ENCODE measurements at regions of chr21 and their contacts with region 1.

Region 1: DNA sequence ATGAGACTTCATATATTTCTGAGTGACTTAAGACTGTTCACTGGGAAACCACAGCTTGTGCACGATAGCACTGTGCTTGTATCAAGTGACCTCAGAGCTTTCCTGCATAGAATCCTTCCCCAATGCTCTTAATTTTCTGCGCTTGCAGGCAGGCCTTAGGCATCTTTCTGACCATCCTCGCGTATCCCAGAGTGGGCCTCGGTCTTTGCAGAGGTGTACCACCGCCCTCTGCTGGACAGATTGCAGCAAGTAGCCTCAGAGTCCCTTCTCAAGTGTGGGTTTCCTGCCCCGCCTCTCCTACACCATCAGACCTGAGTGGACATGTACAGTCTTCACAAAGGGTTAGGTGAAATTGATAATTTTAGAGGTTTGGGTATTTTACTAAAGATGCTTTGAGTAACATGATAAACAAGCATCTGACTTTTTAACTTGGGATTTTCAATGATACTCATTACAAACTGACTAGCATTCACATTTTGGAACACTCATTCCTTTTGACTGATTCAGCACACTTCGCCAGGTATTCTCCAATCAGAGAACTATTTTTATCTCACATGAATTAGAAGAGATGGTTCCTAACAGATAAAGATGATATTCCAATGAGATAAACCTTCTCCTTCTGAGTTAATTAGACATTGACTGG is 246.5 kb upstream of the USP25 start:
- DNase-seq: peak; percentile 87 to 91 (median 88)
- ATAC-seq: peak; percentile 92 to 100 (median 98)
- H3K4me3 ChIP-seq: no peak overlapping the region
- H3K27ac ChIP-seq: no peak overlapping the region
- H3K4me1 ChIP-seq: peaks cover 0 to 5% (median 0%) of the 10 kb centered on the region in 12 donors
- H3K27me3 ChIP-seq: no peaks in the 10 kb centered on the region
- CTCF ChIP-seq: peak; percentile 82 to 97 (median 92)
- POLR2A ChIP-seq: no peak

Region 2: DNA sequence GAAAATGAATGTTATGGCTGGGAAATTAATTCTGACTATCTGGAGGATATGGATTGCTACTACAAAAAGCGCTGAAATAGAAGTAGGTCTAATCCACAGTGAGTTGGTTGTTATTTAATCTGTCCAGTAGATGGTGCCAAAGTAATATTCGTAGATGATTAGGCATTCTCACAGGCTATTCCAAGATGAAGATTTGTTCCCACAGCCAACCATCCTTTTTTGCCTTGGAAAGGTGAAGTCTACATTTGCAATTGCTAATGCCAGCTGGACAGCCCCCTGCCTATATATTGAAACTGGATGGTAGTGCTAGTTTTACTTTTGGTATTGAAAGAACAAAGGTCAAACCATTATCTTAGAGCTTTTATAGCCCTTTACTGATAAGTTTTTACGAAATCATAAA is 1223.5 kb before region 1 on chr21:
- intact Hi-C with region 1: loop called in 4 of 10 experiments (anchors 5 to 10 kb)
- DNase-seq: no peak
- ATAC-seq: peak in 3 of 4 donors; percentile 53 to 70 (median 62)
- H3K4me3 ChIP-seq: no peak overlapping the region
- H3K27ac ChIP-seq: no peak overlapping the region
- H3K4me1 ChIP-seq: no peaks in the 10 kb centered on the region
- H3K27me3 ChIP-seq: peaks cover 0 to 6% (median 0%) of the 10 kb centered on the region in 9 donors
- CTCF ChIP-seq: peak; percentile 37 to 73 (median 53)
- POLR2A ChIP-seq: no peak

Region 3: GRCh38 chr21:14382835-14383594 is 1100.2 kb before region 1 on chr21 and contains the start of gene HSPA13:
- intact Hi-C with region 1: loop called in 1 of 10 experiments (anchors 10 kb)
- DNase-seq: peak; percentile 99 to 100 (median 100)
- ATAC-seq: peak; percentile 99 to 100 (median 100)
- H3K4me3 ChIP-seq: peak within 1 kb of the TSS; percentile 55 to 93 (median 81)
- H3K27ac ChIP-seq: peak within 1 kb of the TSS; percentile 68 to 96 (median 90)
- H3K4me1 ChIP-seq: peaks cover 0 to 41% (median 19%) of the 10 kb centered on the region in 12 donors
- H3K27me3 ChIP-seq: no peaks in the 10 kb centered on the region
- CTCF ChIP-seq: no peak
- POLR2A ChIP-seq: peak in 1 of 2 donors; percentile 50
- total RNA-seq, gene HSPA13: 10.2 to 23.7 (median 16.0) TPM

Region 4: GRCh38 chr21:14403681-14404318 is 1079.5 kb before region 1 on chr21:
- intact Hi-C with region 1: loop called in 1 of 10 experiments (anchors 10 kb)
- DNase-seq: no peak
- ATAC-seq: no peak
- H3K4me3 ChIP-seq: no peak overlapping the region
- H3K27ac ChIP-seq: no peak overlapping the region
- H3K4me1 ChIP-seq: no peaks in the 10 kb centered on the region
- H3K27me3 ChIP-seq: no peaks in the 10 kb centered on the region
- CTCF ChIP-seq: peak; percentile 29 to 67 (median 52)
- POLR2A ChIP-seq: no peak

Region 5: GRCh38 chr21:14877570-14878228 is 605.6 kb before region 1 on chr21:
- intact Hi-C with region 1: loop called in 1 of 10 experiments (anchors 5 kb)
- DNase-seq: no peak
- ATAC-seq: peak; percentile 55 to 88 (median 79)
- H3K4me3 ChIP-seq: no peak overlapping the region
- H3K27ac ChIP-seq: peak overlapping the region in 3 of 12 donors; percentile 11 to 39 (median 26)
- H3K4me1 ChIP-seq: peaks cover 0 to 42% (median 11%) of the 10 kb centered on the region in 12 donors
- H3K27me3 ChIP-seq: no peaks in the 10 kb centered on the region
- CTCF ChIP-seq: no peak
- POLR2A ChIP-seq: no peak

Region 6: DNA sequence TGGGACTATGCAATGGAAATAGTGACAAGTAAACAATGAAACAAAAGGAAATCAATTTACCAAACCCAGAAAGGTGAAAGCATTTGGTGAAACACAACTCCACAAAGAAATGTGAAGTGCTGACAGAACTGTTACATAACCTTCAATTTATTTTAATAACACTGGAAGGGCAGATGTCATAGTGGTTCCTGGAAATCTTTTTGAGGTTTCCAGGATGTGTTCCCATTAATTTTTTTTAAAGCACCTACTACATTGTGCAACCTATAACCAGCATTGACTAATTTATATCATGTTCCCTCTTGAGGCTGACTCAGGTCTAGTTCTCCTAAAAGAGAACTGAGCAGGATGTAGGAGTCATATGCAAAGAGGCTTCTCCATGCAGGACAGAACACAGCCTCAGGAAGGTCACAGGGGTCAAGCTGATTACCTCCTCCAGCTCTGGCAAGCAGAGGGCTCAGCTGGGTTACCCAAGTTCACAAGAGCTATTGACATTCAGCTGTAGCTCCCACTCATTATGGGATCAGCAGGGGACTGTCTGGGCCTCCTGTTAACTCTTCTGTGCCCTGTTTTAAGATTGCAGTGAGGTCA is 261.4 kb before region 1 on chr21:
- intact Hi-C with region 1: loop called in 1 of 10 experiments (anchors 10 kb)
- DNase-seq: peak in 4 of 5 donors; percentile 41 to 76 (median 69)
- ATAC-seq: peak; percentile 90 to 100 (median 99)
- H3K4me3 ChIP-seq: no peak overlapping the region
- H3K27ac ChIP-seq: peak overlapping the region in 6 of 12 donors; percentile 3 to 54 (median 35)
- H3K4me1 ChIP-seq: peaks cover 0 to 36% (median 12%) of the 10 kb centered on the region in 12 donors
- H3K27me3 ChIP-seq: no peaks in the 10 kb centered on the region
- CTCF ChIP-seq: no peak
- POLR2A ChIP-seq: no peak

Measured in heart left ventricle (tissue), 16 donors.